ENCODE measurements at regions of chr6 and their contacts with region 1.

Region 1: DNA sequence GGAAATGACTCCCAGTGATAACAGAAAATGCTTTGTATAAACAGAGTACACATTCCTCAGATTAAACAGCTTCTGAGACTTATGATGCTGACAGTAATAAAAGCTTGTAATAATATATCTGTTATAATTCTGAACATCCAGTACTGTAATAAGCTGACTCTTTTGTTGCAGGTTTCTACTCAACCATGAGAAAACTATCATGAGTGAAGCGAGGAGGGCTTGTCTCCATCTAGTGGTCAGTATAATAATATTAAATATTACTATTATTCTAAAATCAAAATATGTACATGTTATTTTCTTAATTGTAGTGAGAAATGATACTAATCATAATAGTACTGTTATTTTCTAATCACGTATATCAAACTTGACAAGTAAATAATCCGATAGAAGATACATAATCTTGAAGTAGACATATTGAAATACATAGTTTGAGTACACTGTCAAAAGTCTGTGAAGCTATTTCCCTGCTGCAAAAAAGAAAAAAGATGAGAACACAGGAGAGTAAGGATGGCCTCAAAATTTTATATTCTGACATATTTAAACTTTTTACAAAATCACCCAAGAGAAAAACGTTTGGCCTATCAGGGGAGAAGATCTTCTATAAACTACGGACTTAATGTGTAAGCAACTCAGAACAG is 183.1 kb downstream of the MOXD1 start:
- DNase-seq: no peak
- ATAC-seq: peak in 5 of 8 donors; percentile 47 to 79 (median 58)
- H3K4me3 ChIP-seq: no peak overlapping the region
- H3K27ac ChIP-seq: peak overlapping the region in 1 of 10 donors; percentile 2
- H3K4me1 ChIP-seq: no peaks in the 10 kb centered on the region
- H3K27me3 ChIP-seq: peaks cover 0 to 1% (median 0%) of the 10 kb centered on the region in 7 donors
- CTCF ChIP-seq: peak; percentile 44 to 79 (median 62)

Region 2: DNA sequence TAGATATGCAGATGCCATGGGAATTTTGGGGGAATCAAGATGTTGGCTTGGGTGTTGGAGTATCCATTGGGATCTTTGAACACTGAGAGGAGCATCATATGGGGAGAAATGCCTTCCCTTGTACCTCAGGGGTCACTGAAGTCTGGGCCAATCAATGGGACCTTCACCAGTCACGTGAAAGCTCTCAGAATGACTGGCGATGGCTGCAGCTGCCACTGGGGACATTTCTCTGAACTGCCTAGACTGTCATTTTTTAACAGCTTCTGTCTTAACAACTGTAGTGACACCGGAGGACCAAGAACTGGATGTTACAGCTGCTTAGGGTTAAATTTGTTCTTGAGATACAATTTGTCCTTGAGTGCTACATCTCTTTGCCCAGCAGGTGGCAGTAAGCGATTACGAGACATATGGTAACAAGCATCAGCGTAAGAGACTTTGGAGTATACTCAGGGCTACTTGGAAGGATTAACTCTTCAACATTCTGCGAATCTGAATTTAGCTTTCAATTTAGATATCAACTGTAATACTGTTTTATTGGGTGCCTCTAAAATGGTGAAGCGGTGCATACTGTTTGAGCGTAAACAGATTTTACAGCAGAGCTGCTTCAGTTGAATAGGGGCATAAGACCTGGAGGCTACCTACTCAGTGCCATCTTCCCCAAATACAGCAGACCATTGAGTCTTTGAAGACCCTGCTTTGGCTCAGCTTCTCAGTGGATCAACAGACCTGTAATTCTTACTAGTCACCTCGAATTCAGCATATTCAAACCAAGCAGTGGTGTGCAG is 303.0 kb before region 1 on chr6:
- intact Hi-C with region 1: loop called in 5 of 10 experiments (anchors 5 to 10 kb)
- DNase-seq: peak in 1 of 2 donors; percentile 63
- ATAC-seq: peak in 6 of 8 donors; percentile 51 to 77 (median 71)
- H3K4me3 ChIP-seq: no peak overlapping the region
- H3K27ac ChIP-seq: no peak overlapping the region
- H3K4me1 ChIP-seq: peaks cover 0 to 8% (median 0%) of the 10 kb centered on the region in 9 donors
- H3K27me3 ChIP-seq: peaks cover 0 to 40% (median 14%) of the 10 kb centered on the region in 7 donors
- CTCF ChIP-seq: peak; percentile 63 to 89 (median 84)

Region 3: DNA sequence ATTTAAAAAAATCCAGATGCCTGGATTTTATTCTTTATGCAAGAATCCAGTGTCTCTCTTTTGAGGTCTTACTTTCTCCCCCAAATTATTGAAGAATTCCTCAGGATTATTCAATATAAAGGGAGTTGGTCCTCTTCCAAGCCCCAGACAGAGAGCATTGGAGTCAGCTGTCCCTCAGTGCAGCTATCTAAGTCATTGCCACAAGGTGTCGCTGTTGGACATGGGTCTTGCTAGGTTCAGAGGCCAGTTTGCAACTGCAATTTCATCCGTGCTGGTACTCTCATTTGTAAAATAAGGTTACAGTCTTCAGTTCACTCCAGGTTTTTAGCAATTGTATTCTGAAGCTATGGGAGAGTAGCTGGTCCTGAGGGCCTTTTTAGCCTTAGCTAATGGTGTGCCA is 294.8 kb before region 1 on chr6:
- intact Hi-C with region 1: loop called (anchors 2 to 10 kb)
- DNase-seq: peak in 1 of 2 donors; percentile 32
- ATAC-seq: no peak
- H3K4me3 ChIP-seq: no peak overlapping the region
- H3K27ac ChIP-seq: no peak overlapping the region
- H3K4me1 ChIP-seq: no peaks in the 10 kb centered on the region
- H3K27me3 ChIP-seq: peaks cover 0 to 7% (median 0%) of the 10 kb centered on the region in 7 donors
- CTCF ChIP-seq: peak in 8 of 9 donors; percentile 34 to 67 (median 54)

Region 4: GRCh38 chr6:131949909-131950766 is 268.0 kb before region 1 on chr6:
- intact Hi-C with region 1: loop called in 2 of 10 experiments (anchors 2 to 10 kb)
- DNase-seq: peak; percentile 74 to 77
- ATAC-seq: peak; percentile 60 to 84 (median 72)
- H3K4me3 ChIP-seq: peak overlapping the region; percentile 32 to 76 (median 73)
- H3K27ac ChIP-seq: peak overlapping the region; percentile 80 to 97 (median 92)
- H3K4me1 ChIP-seq: peaks cover 6 to 51% (median 23%) of the 10 kb centered on the region in 9 donors
- H3K27me3 ChIP-seq: peaks cover 0 to 69% (median 0%) of the 10 kb centered on the region in 7 donors
- CTCF ChIP-seq: peak; percentile 38 to 66 (median 54)

Region 5: GRCh38 chr6:132153221-132153898 is 64.8 kb before region 1 on chr6:
- intact Hi-C with region 1: loop called in 1 of 10 experiments (anchors 10 kb)
- DNase-seq: no peak
- ATAC-seq: peak in 2 of 8 donors; percentile 31 to 52
- H3K4me3 ChIP-seq: no peak overlapping the region
- H3K27ac ChIP-seq: peak overlapping the region in 4 of 10 donors; percentile 34 to 57 (median 52)
- H3K4me1 ChIP-seq: no peaks in the 10 kb centered on the region
- H3K27me3 ChIP-seq: no peaks in the 10 kb centered on the region
- CTCF ChIP-seq: no peak

Region 6: GRCh38 chr6:132161283-132161682 is 56.9 kb before region 1 on chr6:
- intact Hi-C with region 1: loop called in 2 of 10 experiments (anchors 5 to 10 kb)
- DNase-seq: peak in 1 of 2 donors; percentile 18
- ATAC-seq: peak in 7 of 8 donors; percentile 63 to 80 (median 74)
- H3K4me3 ChIP-seq: no peak overlapping the region
- H3K27ac ChIP-seq: no peak overlapping the region
- H3K4me1 ChIP-seq: peaks cover 0 to 3% (median 0%) of the 10 kb centered on the region in 9 donors
- H3K27me3 ChIP-seq: no peaks in the 10 kb centered on the region
- CTCF ChIP-seq: peak in 8 of 9 donors; percentile 50 to 80 (median 61)

Region 7: GRCh38 chr6:132174919-132175318 is 43.3 kb before region 1 on chr6:
- intact Hi-C with region 1: loop called in 1 of 10 experiments (anchors 5 kb)
- DNase-seq: no peak
- ATAC-seq: no peak
- H3K4me3 ChIP-seq: no peak overlapping the region
- H3K27ac ChIP-seq: no peak overlapping the region
- H3K4me1 ChIP-seq: no peaks in the 10 kb centered on the region
- H3K27me3 ChIP-seq: no peaks in the 10 kb centered on the region
- CTCF ChIP-seq: no peak